Gastrocnemius medialis (tissue), 4 donors: ENCODE measurements at regions of chr6 and their contacts with region 1.

Region 1: GRCh38 chr6:133130863-133131262 is 110.3 kb upstream of the EYA4 start:
- DNase-seq: peak; percentile 91
- ATAC-seq: peak; percentile 84 to 91
- H3K4me3 ChIP-seq: no peak overlapping the region
- H3K27ac ChIP-seq: peak overlapping the region; percentile 73 to 85 (median 80)
- H3K4me1 ChIP-seq: peaks cover 32 to 38% of the 10 kb centered on the region in 2 donors
- H3K27me3 ChIP-seq: no peaks in the 10 kb centered on the region
- CTCF ChIP-seq: peak in 2 of 5 experiments; percentile 24 to 26
- POLR2A ChIP-seq: no peak

Region 2: DNA sequence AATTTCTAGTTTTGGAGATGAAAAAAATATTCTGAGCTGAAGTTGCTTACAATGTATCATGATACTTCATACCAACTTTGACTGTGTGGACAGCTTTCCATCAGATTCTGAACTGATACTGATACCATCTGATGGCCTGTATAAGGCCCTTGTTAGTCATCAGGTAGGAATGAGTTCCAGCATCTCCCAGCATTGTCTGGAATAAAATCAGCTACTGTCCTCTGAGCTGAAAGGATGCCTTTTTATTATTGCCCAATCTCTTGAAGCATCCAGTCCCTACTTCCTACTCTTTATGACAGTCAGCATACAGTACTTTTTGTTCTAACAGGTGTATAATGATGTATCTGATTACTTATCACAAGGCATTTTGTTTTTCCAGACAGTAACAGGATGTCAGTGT is 39.7 kb after region 1 on chr6:
- in situ Hi-C with region 1: no loop called
- intact Hi-C with region 1: loop called (anchors 5 kb)
- DNase-seq: peak in 1 of 2 donors; percentile 32
- ATAC-seq: peak; percentile 94 to 96
- H3K4me3 ChIP-seq: no peak overlapping the region
- H3K27ac ChIP-seq: peak overlapping the region in 2 of 4 donors; percentile 51 to 77
- H3K4me1 ChIP-seq: peaks cover 5 to 7% of the 10 kb centered on the region in 2 donors
- H3K27me3 ChIP-seq: no peaks in the 10 kb centered on the region
- CTCF ChIP-seq: no peak
- POLR2A ChIP-seq: no peak

Region 3: GRCh38 chr6:133202610-133203343 is 71.9 kb after region 1 on chr6:
- in situ Hi-C with region 1: no loop called
- intact Hi-C with region 1: no loop called
- DNase-seq: no peak
- ATAC-seq: no peak
- H3K4me3 ChIP-seq: no peak overlapping the region
- H3K27ac ChIP-seq: no peak overlapping the region
- H3K4me1 ChIP-seq: peaks cover 7 to 15% of the 10 kb centered on the region in 2 donors
- H3K27me3 ChIP-seq: no peaks in the 10 kb centered on the region
- CTCF ChIP-seq: no peak
- POLR2A ChIP-seq: no peak

Region 4: GRCh38 chr6:133502441-133503259 is 371.8 kb after region 1 on chr6:
- in situ Hi-C with region 1: no loop called
- intact Hi-C with region 1: loop called (anchors 5 kb)
- DNase-seq: peak in 1 of 2 donors; percentile 58
- ATAC-seq: peak; percentile 53 to 73
- H3K4me3 ChIP-seq: no peak overlapping the region
- H3K27ac ChIP-seq: peak overlapping the region; percentile 1 to 63 (median 58)
- H3K4me1 ChIP-seq: peaks cover 35 to 57% of the 10 kb centered on the region in 2 donors
- H3K27me3 ChIP-seq: no peaks in the 10 kb centered on the region
- CTCF ChIP-seq: no peak
- POLR2A ChIP-seq: no peak